Endothelial cell of umbilical vein (primary cell): ENCODE measurements at regions of chr2 and their contacts with region 1.

Region 1: DNA sequence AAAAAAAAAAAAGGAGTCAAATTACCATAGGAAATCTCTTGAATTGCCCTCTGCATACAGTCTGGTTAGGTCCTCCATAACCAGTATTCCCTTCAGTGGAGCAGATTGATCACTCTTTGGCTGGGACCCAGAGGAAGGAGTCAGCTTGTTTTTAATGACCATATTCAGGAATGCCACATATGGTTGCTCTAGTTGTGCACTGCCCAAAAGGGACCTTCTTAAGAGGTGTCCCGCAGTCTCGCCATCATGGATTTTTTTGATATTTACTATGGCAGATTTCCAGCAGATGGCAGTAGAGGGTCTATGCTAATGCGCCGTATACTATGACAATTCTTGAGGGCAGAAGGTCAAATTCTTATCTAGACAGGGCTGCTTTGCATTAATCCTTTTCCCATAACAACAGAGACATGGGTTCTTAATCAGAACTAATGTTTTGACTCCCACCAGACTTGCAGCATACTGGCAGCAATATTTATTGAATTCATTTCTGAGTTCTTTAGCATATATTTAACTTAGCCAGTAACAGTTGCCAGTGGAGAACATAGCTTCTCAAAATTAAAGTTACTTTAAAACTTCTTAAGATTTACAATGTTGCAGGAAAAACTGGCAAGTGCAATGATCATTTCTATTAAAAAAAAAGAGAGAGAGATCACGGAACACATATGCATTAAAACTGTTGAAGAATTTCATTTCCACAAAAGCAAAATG is 31.8 kb upstream of the INPP4A start:
- DNase-seq: peak; percentile 87
- H3K4me3 ChIP-seq: no peak overlapping the region
- H3K27ac ChIP-seq: no peak overlapping the region
- H3K4me1 ChIP-seq: peaks cover 3% of the 10 kb centered on the region
- H3K27me3 ChIP-seq: no peaks in the 10 kb centered on the region
- CTCF ChIP-seq: peak; percentile 58 to 61
- POLR2A ChIP-seq: no peak

Region 2: DNA sequence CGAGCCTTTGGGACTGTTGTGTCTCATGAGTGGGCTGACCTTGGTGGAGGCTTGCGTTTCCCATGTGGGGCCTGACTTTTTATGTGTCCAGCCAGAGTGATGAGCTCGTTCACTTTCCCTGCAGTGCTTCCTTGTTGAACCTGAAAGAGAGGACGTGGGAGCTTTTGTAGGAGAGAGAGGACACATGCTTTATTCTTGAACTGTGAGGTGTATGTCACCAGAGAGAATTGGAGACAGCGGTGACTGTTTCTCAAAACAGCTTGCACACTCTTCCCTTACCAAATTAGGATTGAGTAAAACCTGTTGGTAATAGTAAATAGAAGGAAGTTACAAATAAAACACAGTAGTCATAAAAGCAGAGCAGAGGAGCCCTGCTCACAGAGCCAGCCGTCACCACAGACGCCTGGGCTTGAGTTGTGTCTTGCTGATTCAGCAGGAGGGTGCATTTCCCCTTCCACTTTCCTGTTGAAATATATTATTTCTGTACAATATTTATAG is 92.5 kb after region 1 on chr2:
- CTCF ChIA-PET with region 1: interaction called, 5 read pairs
- POLR2A ChIA-PET with region 1: no interaction called
- dilution Hi-C with region 1: no loop called
- intact Hi-C with region 1: loop called (anchors 5 kb)
- DNase-seq: peak; percentile 34
- H3K4me3 ChIP-seq: no peak overlapping the region
- H3K27ac ChIP-seq: no peak overlapping the region
- H3K4me1 ChIP-seq: peaks cover 3% of the 10 kb centered on the region
- H3K27me3 ChIP-seq: no peaks in the 10 kb centered on the region
- CTCF ChIP-seq: no peak
- POLR2A ChIP-seq: no peak

Region 3: GRCh38 chr2:98518090-98518489 is 105.2 kb after region 1 on chr2:
- CTCF ChIA-PET with region 1: interaction called, 20 read pairs
- POLR2A ChIA-PET with region 1: no interaction called
- dilution Hi-C with region 1: no loop called
- intact Hi-C with region 1: loop called (anchors 1 kb)
- DNase-seq: peak; percentile 65
- H3K4me3 ChIP-seq: no peak overlapping the region
- H3K27ac ChIP-seq: no peak overlapping the region
- H3K4me1 ChIP-seq: peaks cover 7% of the 10 kb centered on the region
- H3K27me3 ChIP-seq: no peaks in the 10 kb centered on the region
- CTCF ChIP-seq: peak; percentile 38 to 68
- POLR2A ChIP-seq: no peak

Region 4: GRCh38 chr2:98568881-98569793 is 156.2 kb after region 1 on chr2:
- CTCF ChIA-PET with region 1: interaction called, 11 read pairs
- POLR2A ChIA-PET with region 1: no interaction called
- dilution Hi-C with region 1: no loop called
- intact Hi-C with region 1: loop called (anchors 1 kb)
- DNase-seq: peak; percentile 30
- H3K4me3 ChIP-seq: no peak overlapping the region
- H3K27ac ChIP-seq: no peak overlapping the region
- H3K4me1 ChIP-seq: no peaks in the 10 kb centered on the region
- H3K27me3 ChIP-seq: no peaks in the 10 kb centered on the region
- CTCF ChIP-seq: peak; percentile 95
- POLR2A ChIP-seq: no peak

Region 5: DNA sequence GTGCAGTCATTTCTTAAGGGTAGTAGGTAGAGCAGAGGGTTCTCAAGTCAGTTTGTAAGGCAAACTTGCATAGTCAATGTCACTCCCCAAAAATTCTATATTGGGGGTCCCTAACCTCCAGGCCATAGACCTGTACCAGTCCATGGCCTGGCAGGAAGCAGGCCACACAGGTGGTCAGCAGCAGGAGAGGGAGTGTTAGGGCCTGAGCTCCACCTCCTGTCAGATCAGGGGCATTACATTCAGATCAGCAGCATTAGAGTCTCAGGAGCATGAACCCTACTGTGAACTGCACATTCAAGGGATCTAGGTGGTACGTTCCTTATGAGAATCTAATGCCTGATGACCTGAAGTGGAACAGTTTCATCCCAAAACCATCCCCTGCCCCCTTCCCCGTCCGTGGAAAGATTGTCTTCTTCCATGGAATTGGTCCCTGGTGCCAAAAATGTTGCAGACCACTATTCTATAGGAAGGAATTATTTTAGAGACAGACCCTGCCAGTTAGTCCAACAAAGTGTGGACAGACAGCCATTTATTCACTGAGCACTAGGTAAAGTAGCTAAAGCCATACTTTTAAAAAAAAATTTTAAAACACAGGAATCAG is 188.7 kb after region 1 on chr2:
- CTCF ChIA-PET with region 1: interaction called, 18 read pairs
- POLR2A ChIA-PET with region 1: no interaction called
- dilution Hi-C with region 1: no loop called
- intact Hi-C with region 1: loop called (anchors 1 kb)
- DNase-seq: peak; percentile 48
- H3K4me3 ChIP-seq: no peak overlapping the region
- H3K27ac ChIP-seq: no peak overlapping the region
- H3K4me1 ChIP-seq: peaks cover 6% of the 10 kb centered on the region
- H3K27me3 ChIP-seq: no peaks in the 10 kb centered on the region
- CTCF ChIP-seq: peak; percentile 53 to 70
- POLR2A ChIP-seq: no peak